Activated T-helper 2 cell treated with anti-CD3 and anti-CD28 coated beads, Interferon-gamma antibody, Interleukin-2, Interleukin-4, amounts not matched to agents 10 μg/mL and 5 μg/mL and 100 μg/mL, durations not matched to agents 14 hours and 24 hours and 36 hours (primary cell): ENCODE measurements at regions of chr5 and their contacts with region 1.

Region 1: DNA sequence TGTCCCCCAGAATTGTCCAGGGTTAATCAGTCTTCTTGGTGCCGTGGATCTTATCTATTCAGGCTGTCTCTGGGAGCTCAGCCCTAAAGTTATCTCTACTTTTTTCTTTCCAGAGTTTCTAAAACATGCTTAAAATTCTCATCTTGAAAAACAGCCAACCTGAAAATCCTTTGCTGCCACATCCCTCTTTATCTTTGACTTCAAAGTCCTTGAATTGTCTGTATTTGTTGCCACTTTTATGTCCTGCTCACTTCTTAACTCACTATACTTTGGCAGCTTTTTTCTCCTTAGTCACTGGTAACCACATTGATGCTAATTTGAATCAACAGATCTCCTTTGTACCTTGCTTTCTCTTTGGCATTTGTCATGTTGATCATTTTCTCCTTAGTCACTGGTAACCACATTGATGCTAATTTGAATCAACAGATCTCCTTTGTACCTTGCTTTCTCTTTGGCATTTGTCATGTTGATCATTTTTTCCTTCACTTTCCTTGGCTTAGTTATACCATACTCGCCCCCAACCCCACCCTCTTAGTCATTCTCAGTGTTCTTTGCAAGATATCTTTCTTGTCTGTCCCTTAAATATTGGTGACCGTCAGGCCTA is 8.5 kb downstream of the DMXL1 start:
- DNase-seq: no peak
- H3K4me3 Mint-ChIP-seq: peak overlapping the region; percentile 43
- H3K27ac Mint-ChIP-seq: peak overlapping the region; percentile 73
- H3K4me1 Mint-ChIP-seq: peaks cover 41% of the 10 kb centered on the region
- H3K27me3 Mint-ChIP-seq: no peaks in the 10 kb centered on the region

Region 2: GRCh38 chr5:118919016-118919415 is 160.4 kb before region 1 on chr5:
- intact Hi-C with region 1: no loop called
- DNase-seq: no peak
- H3K4me3 Mint-ChIP-seq: no peak overlapping the region
- H3K27ac Mint-ChIP-seq: no peak overlapping the region
- H3K4me1 Mint-ChIP-seq: no peaks in the 10 kb centered on the region
- H3K27me3 Mint-ChIP-seq: no peaks in the 10 kb centered on the region

Region 3: GRCh38 chr5:119031905-119032304 is 47.5 kb before region 1 on chr5:
- intact Hi-C with region 1: loop called (anchors 1 kb)
- DNase-seq: no peak
- H3K4me3 Mint-ChIP-seq: peak overlapping the region; percentile 3
- H3K27ac Mint-ChIP-seq: peak overlapping the region; percentile 58
- H3K4me1 Mint-ChIP-seq: peaks cover 25% of the 10 kb centered on the region
- H3K27me3 Mint-ChIP-seq: no peaks in the 10 kb centered on the region

Region 4: GRCh38 chr5:119063579-119064379 is 15.6 kb before region 1 on chr5:
- intact Hi-C with region 1: loop called (anchors 1 kb)
- DNase-seq: no peak
- H3K4me3 Mint-ChIP-seq: no peak overlapping the region
- H3K27ac Mint-ChIP-seq: peak overlapping the region; percentile 4
- H3K4me1 Mint-ChIP-seq: peaks cover 14% of the 10 kb centered on the region
- H3K27me3 Mint-ChIP-seq: peaks cover 3% of the 10 kb centered on the region

Region 5: DNA sequence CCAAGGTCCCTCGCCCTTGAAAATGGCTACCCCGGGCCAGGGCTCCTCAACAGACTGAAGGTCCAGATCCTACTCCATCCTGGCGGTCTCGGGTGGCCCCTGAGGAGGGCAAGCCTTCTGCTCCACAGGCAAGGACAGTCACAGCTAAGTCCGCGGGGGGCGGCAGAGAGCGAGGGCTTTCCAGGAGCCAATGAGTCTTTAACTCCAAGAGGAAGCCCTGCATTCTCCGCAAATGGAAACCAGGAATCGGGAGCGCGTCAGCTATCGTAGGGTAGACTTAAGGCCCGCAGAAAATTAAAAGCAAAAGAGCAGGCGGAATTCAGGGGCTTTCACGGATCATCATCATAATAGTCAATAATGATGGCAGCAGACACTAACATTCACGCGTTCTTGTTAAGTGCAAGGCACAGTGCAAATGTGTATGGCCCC is 188.6 kb after region 1 on chr5:
- intact Hi-C with region 1: loop called (anchors 2 kb)
- DNase-seq: peak; percentile 70
- H3K4me3 Mint-ChIP-seq: peak overlapping the region; percentile 99
- H3K27ac Mint-ChIP-seq: peak overlapping the region; percentile 95
- H3K4me1 Mint-ChIP-seq: peaks cover 51% of the 10 kb centered on the region
- H3K27me3 Mint-ChIP-seq: no peaks in the 10 kb centered on the region